ENCODE measurements at regions of chr22 and their contacts with region 1.

Region 1: GRCh38 chr22:46267431-46268279 is at the start of gene TTC38:
- DNase-seq: peak; percentile 90
- ATAC-seq: peak; percentile 94
- H3K4me3 ChIP-seq: peak within 1 kb of the TSS; percentile 79 to 99 (median 99)
- H3K27ac ChIP-seq: peak within 1 kb of the TSS; percentile 98
- H3K4me1 ChIP-seq: peaks cover 45% of the 10 kb centered on the region
- H3K27me3 ChIP-seq: peaks cover 0 to 3% of the 10 kb centered on the region in 2 experiments; a peak in 1 of 5 replicates
- CTCF ChIP-seq: 0 out of 2 replicates have a peak, but pooled peaks have one; percentile 5
- EP300 ChIP-seq: peak in 1 of 2 experiments; percentile 21; a peak in 1 of 4 replicates
- POLR2A ChIP-seq: peak; percentile 80 to 93
- RAD21 ChIP-seq: no peak
- total RNA-seq, gene TTC38: 105 and 106 TPM in 2 replicates

Region 2: DNA sequence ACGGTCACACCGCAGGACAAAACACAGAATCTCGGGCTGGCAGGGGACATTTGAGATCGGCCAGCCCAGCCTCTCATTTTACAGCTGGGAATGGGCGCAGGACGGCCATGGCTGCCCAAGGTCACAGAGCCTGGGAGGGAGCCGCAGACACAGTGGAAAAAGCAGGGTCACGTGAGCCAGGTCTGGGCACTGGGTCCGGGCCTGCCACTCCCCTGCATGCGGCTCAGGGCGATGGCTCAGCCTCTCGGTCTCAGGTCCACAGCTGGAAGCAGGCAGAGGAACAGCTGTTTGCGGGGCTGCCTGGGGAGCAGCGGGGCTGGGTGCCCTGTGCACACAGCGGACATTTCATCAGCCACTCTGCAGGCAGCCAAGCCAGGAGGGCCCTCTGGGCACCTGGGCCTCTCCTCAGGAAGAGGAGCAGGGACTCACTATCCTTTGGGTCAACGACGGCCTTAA is 127.7 kb before region 1 on chr22:
- CTCF ChIA-PET with region 1: no interaction called
- POLR2A ChIA-PET with region 1: interaction called, 16 read pairs
- in situ Hi-C with region 1: no loop called
- intact Hi-C with region 1: no loop called
- DNase-seq: peak; percentile 58
- ATAC-seq: peak; percentile 62
- H3K4me3 ChIP-seq: peak overlapping the region in 2 of 3 experiments; percentile 35 to 57; a peak in 3 of 6 replicates
- H3K27ac ChIP-seq: no peak overlapping the region
- H3K4me1 ChIP-seq: peaks cover 74% of the 10 kb centered on the region
- H3K27me3 ChIP-seq: no peaks in the 10 kb centered on the region; a peak in 2 of 5 replicates
- CTCF ChIP-seq: no peak
- EP300 ChIP-seq: no peak
- POLR2A ChIP-seq: no peak
- RAD21 ChIP-seq: no peak

Region 3: DNA sequence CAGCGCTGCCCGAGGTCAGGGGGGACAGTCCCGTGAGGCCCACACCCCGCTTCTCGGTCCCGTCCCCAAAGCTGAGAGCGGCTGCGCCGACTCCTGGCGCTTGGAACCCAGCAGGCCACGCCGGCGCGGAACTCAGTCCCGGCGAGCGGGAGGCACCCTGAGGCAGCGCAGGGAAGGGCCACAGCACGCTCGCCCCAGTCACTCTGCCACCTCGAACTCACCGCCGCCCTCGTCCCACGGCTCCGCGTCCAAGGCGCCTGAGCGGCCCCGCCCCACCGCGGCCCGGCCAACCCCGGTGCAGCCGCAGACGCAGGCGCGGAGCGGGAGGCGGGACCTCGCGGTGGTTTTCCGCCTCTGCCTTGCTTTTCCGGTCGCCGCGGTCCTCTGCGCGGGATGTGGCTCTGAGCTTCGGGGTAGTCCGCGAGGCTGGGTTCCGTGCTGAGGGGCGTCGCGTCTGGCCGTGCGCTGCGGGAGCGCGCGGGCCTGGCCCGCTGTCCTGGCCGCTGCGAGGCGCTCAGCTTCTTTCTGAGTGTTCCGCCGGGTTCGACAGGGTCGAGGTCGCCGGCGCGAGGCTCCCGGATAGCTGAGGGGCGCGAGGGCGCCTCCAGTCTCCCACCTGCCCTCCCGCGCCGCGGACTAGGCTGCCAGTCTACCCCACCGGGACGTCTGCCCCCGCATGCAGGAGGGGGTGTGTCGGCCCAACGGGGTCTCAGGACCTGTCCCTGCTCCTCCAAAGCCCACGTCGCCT is 17.4 kb before region 1 on chr22 and contains the start of gene CDPF1:
- CTCF ChIA-PET with region 1: no interaction called
- POLR2A ChIA-PET with region 1: interaction called, 83 read pairs
- in situ Hi-C with region 1: no loop called
- intact Hi-C with region 1: loop called (anchors 2 kb)
- DNase-seq: peak; percentile 73
- ATAC-seq: peak; percentile 93
- H3K4me3 ChIP-seq: peak within 1 kb of the TSS; percentile 70 to 95 (median 89)
- H3K27ac ChIP-seq: peak within 1 kb of the TSS; percentile 85
- H3K4me1 ChIP-seq: peaks cover 46% of the 10 kb centered on the region
- H3K27me3 ChIP-seq: no peaks in the 10 kb centered on the region
- CTCF ChIP-seq: peak; percentile 47
- EP300 ChIP-seq: no peak
- POLR2A ChIP-seq: peak; percentile 80 to 97
- RAD21 ChIP-seq: peak; percentile 21
- total RNA-seq, gene CDPF1: 5.2 and 6.0 TPM in 2 replicates

Region 4: DNA sequence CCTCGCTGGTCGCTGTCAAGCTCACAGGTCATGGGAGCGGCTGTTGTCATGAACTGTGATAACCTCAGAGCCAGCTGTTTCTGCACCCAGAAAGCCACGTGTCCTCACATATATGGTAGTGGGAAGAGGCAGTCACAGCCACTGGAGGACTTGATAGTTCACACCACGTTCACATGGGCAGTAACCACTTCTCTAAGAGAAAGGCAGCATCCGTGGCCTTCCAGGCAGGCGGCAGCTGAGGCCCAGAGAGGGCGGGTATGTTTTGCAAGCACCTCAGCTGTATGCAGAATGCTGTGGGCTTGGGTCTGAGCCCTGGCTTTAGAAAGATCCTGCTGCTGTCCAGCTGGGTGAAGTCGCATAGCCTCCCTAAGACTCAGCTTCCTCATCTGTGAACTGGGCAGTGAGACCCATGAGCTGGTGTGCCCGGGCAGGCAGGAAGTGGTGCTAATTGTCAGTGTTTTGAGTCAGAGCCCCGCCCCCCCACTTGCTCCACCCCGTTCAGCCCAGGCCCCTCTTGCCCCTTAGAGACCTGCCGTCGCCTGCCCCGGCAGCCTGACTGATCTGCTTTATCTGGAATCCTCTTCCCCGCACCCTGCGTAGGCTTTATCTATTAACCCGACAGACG is 13.5 kb after region 1 on chr22:
- CTCF ChIA-PET with region 1: no interaction called
- POLR2A ChIA-PET with region 1: interaction called, 41 read pairs
- in situ Hi-C with region 1: no loop called
- intact Hi-C with region 1: no loop called
- DNase-seq: no peak
- ATAC-seq: no peak
- H3K4me3 ChIP-seq: no peak overlapping the region
- H3K27ac ChIP-seq: no peak overlapping the region
- H3K4me1 ChIP-seq: no peaks in the 10 kb centered on the region
- H3K27me3 ChIP-seq: no peaks in the 10 kb centered on the region
- CTCF ChIP-seq: no peak
- EP300 ChIP-seq: no peak
- POLR2A ChIP-seq: peak in 1 of 2 experiments; percentile 27; a peak in 1 of 4 replicates
- RAD21 ChIP-seq: no peak

Region 5: DNA sequence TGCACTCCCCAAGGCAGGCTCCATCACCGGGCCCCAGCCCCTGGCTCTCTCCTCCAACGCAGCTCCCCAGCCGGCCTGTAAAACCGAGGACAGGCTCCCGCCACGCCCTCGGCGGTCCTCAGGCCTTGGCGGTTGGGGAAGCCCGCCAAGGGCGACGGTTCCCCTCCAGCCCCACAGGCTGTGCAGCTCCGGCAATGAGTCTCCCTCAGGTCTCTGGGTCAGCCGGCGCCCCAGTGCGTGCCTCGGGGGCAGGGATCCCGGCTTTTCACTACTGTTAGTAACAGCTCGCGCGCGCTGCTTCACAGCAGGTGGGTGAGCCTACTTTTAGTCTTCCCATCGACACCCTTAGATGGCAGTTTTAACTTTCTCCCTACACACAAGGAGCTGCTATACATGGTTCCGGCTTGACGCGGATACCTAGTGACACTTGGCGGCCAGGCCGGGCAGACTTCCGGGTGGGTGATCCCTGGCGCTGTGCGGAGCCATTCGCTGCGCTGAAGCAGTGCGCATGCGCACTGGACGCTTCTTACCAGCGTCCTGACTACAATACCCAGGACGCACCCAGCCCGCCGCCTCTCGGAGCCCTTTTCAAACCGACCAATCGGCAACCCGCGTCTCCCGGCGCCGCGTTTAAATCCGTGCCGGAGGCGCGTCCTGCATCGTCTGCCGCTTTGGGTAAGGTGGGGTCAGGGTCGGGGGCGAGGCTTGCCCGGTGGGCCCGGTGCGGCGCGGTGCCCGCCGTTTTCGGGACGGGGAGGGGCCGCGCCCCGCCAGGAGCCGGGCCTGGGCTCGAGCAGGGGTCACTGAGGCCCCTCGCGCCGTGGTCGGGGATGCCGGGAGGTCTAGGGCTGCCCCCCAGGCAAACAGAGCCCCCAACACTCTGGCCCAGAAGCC is 28.8 kb after region 1 on chr22 and contains the start of gene GTSE1:
- CTCF ChIA-PET with region 1: no interaction called
- POLR2A ChIA-PET with region 1: interaction called, 33 read pairs
- in situ Hi-C with region 1: no loop called
- intact Hi-C with region 1: no loop called
- DNase-seq: peak; percentile 95
- ATAC-seq: peak; percentile 93
- H3K4me3 ChIP-seq: peak within 1 kb of the TSS; percentile 82 to 91 (median 84)
- H3K27ac ChIP-seq: peak within 1 kb of the TSS; percentile 62
- H3K4me1 ChIP-seq: peaks cover 33% of the 10 kb centered on the region
- H3K27me3 ChIP-seq: no peaks in the 10 kb centered on the region; a peak in 1 of 5 replicates
- CTCF ChIP-seq: peak; percentile 84
- EP300 ChIP-seq: no peak
- POLR2A ChIP-seq: peak; percentile 43 to 49; a peak in 3 of 4 replicates
- RAD21 ChIP-seq: peak; percentile 56
- total RNA-seq, gene GTSE1: 13.5 and 15.3 TPM in 2 replicates

Measured in HepG2 (cell line).